ENCODE measurements at regions of chr5 and their contacts with region 1.

Region 1: GRCh38 chr5:159106569-159107282 is 7.0 kb upstream of the EBF1 start:
- DNase-seq: peak in 8 of 10 donors; percentile 64 to 83 (median 73)
- H3K4me3 ChIP-seq: peak overlapping the region in 57 of 59 donors; percentile 16 to 70 (median 47)
- H3K27ac ChIP-seq: no peak overlapping the region
- H3K27me3 ChIP-seq: peaks cover 0 to 99% (median 78%) of the 10 kb centered on the region in 45 donors
- CTCF ChIP-seq: peak; percentile 54 to 99 (median 93)

Region 2: GRCh38 chr5:158174918-158175851 is 931.5 kb before region 1 on chr5:
- intact Hi-C with region 1: loop called (anchors 2 to 10 kb)
- DNase-seq: peak; percentile 29 to 72 (median 65)
- H3K4me3 ChIP-seq: no peak overlapping the region
- H3K27ac ChIP-seq: no peak overlapping the region
- H3K27me3 ChIP-seq: peaks cover 0 to 26% (median 5%) of the 10 kb centered on the region in 45 donors
- CTCF ChIP-seq: peak; percentile 34 to 86 (median 74)

Region 3: GRCh38 chr5:158695595-158696330 is 411.0 kb before region 1 on chr5:
- intact Hi-C with region 1: loop called (anchors 1 to 2 kb)
- DNase-seq: peak; percentile 62 to 87 (median 76)
- H3K4me3 ChIP-seq: no peak overlapping the region
- H3K27ac ChIP-seq: no peak overlapping the region
- H3K27me3 ChIP-seq: peaks cover 0 to 27% (median 9%) of the 10 kb centered on the region in 45 donors
- CTCF ChIP-seq: peak; percentile 90 to 100 (median 97)